Tibial artery (tissue), 4 donors: ENCODE measurements at regions of chr10 and their contacts with region 1.

Region 1: DNA sequence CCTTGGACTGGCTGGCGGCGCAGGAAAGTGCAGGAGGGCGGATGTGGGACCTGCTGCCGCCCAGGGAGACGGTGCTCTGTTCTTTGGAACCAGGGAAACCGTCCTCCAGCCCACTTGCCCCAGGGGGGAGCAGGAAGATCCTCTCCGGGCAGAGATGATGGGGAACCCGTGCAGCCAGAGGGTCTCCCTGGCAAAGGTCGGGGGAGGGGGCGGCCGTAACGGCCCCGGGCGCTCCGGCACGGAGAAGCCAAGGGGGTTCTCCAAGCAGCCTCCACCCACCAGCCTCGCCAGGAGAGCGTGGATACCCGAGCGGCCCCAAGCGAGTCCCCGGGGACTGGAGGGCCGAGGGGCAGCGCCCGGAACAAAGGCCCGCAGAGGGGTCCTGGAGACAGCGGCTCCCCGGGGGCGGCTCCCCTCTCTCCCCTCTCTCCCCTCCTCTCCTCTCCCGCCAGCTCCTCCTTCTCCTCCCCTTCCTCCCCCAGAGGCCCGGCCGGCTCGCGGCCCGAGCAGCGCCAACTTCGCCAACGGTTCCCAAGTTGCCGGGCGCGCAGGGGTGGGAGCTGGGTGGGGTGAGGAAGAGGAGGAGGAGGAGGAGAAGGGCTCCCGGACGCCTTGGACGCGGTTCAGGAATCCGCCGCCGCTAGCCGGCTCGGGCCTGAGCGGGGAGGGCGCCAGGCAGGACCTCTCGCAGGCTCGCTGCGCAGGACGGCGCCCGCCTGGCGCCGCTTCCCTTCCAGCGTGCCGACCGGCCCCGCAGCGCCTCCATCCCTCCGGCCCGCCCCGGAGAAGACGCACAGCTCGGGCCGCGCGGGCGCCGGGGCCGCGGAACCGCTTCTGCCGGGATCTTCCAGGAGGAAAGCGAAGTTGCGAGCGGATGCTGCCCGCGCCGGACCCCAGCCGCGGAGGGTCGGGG is at the start of gene CHST3:
- DNase-seq: peak; percentile 56 to 92
- H3K4me3 ChIP-seq: peak within 1 kb of the TSS; percentile 75
- H3K27ac ChIP-seq: peak within 1 kb of the TSS; percentile 94 to 99
- H3K4me1 ChIP-seq: peaks cover 0 to 51% (median 34%) of the 10 kb centered on the region in 4 donors
- H3K27me3 ChIP-seq: no peaks in the 10 kb centered on the region
- CTCF ChIP-seq: no peak

Region 2: DNA sequence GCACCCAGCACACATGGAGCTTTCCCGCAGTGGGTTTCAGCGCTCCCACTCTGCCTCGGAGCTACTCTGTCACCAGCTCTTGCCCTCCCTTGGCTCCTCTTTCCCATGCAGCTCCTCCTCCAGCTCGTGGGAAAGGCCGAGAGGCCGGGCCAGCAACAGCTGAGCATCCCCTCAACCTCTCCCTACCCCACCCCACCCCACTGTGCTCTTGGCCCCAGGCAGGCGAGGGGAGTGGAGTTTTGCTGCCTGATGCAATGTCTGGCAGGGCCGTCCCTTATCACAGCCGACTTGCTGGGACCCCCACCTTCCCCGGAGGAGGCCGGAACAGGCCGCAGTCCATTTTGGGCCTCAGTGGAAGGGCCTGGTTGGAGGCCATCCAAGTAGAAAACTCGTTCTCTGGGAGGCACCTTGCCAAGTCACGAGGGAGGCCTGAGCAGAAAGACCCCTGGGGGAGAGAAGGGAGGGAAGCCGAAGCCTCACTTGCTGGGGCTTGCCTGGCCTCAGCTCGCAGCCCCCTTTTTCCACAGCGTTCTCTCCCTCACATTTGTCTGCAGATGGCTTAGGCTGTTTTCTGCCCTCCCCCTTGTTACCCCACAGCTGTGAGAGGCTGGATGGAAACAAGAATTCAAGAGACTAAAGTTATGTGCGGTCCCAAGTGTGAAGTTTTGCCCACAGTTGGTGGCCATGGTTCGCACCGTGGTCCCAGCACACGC is 35.5 kb after region 1 on chr10:
- intact Hi-C with region 1: loop called (anchors 1 kb)
- DNase-seq: peak; percentile 74 to 90
- H3K4me3 ChIP-seq: peak overlapping the region in 1 of 2 donors; percentile 19
- H3K27ac ChIP-seq: peak overlapping the region; percentile 76 to 81
- H3K4me1 ChIP-seq: peaks cover 6 to 76% (median 64%) of the 10 kb centered on the region in 4 donors
- H3K27me3 ChIP-seq: no peaks in the 10 kb centered on the region
- CTCF ChIP-seq: no peak

Region 3: GRCh38 chr10:72319416-72320254 is 355.6 kb after region 1 on chr10:
- intact Hi-C with region 1: loop called (anchors 5 kb)
- DNase-seq: peak; percentile 93 to 97
- H3K4me3 ChIP-seq: peak overlapping the region; percentile 46 to 47
- H3K27ac ChIP-seq: peak overlapping the region; percentile 84 to 85
- H3K4me1 ChIP-seq: peaks cover 0 to 70% (median 53%) of the 10 kb centered on the region in 4 donors
- H3K27me3 ChIP-seq: no peaks in the 10 kb centered on the region
- CTCF ChIP-seq: peak in 1 of 2 experiments; percentile 10